MCF 10A (cell line): ENCODE measurements at regions of chr4 and their contacts with region 1.

Region 1: GRCh38 chr4:122602277-122603142 is 18.4 kb downstream of the IL21 start:
- DNase-seq: peak; percentile 59
- H3K4me3 Mint-ChIP-seq: peak overlapping the region; percentile 47
- H3K27ac Mint-ChIP-seq: no peak overlapping the region
- H3K4me1 Mint-ChIP-seq: no peaks in the 10 kb centered on the region
- H3K27me3 Mint-ChIP-seq: peaks cover 18% of the 10 kb centered on the region
- CTCF ChIP-seq: peak; percentile 43

Region 2: DNA sequence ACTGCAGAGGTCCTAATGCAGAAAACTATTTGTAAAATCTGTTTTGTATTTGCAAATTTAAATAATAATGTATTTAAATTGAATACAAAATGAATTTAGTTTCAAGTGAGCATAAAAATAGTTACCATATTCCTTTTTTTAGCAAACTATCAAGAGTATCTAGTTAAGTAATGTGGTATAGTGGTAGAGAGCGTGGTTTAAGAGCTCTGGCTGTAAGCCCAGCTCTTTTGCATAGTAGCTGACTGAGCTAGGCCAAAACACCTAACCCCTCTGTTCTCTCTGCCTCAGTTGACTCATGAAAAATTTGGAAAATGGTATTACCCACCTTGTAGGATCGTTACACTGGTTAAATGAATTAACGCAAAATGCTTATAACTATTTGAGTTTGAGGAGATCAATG is 241.8 kb before region 1 on chr4:
- CTCF ChIA-PET with region 1: no interaction called
- POLR2A ChIA-PET with region 1: no interaction called
- intact Hi-C with region 1: no loop called
- DNase-seq: no peak
- H3K4me3 Mint-ChIP-seq: no peak overlapping the region
- H3K27ac Mint-ChIP-seq: no peak overlapping the region
- H3K4me1 Mint-ChIP-seq: no peaks in the 10 kb centered on the region
- H3K27me3 Mint-ChIP-seq: no peaks in the 10 kb centered on the region
- CTCF ChIP-seq: no peak

Region 3: GRCh38 chr4:122588453-122589238 is 13.9 kb before region 1 on chr4:
- CTCF ChIA-PET with region 1: interaction called, 24 read pairs
- POLR2A ChIA-PET with region 1: interaction called, 6 read pairs
- intact Hi-C with region 1: no loop called
- DNase-seq: peak; percentile 24
- H3K4me3 Mint-ChIP-seq: no peak overlapping the region
- H3K27ac Mint-ChIP-seq: no peak overlapping the region
- H3K4me1 Mint-ChIP-seq: peaks cover 19% of the 10 kb centered on the region
- H3K27me3 Mint-ChIP-seq: no peaks in the 10 kb centered on the region
- CTCF ChIP-seq: no peak

Region 4: DNA sequence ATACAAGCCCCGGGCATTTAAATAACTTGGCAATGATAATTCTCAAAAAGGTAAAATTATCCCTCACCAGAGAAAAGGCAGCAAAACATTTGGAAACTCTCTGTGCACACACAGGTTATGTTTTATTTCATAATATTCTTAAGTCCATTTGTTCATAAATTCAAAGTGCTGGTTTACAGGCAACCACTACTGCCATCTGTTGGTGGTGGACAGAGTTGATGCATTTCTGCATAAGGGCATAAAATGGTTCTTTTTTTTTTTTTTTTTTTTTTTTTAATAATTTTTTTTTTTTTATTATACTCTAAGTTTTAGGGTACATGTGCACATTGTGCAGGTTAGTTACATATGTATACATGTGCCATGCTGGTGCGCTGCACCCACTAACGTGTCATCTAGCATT is 49.9 kb after region 1 on chr4:
- CTCF ChIA-PET with region 1: interaction called, 11 read pairs
- POLR2A ChIA-PET with region 1: no interaction called
- intact Hi-C with region 1: loop called (anchors 5 kb)
- DNase-seq: peak; percentile 62
- H3K4me3 Mint-ChIP-seq: no peak overlapping the region
- H3K27ac Mint-ChIP-seq: no peak overlapping the region
- H3K4me1 Mint-ChIP-seq: no peaks in the 10 kb centered on the region
- H3K27me3 Mint-ChIP-seq: no peaks in the 10 kb centered on the region
- CTCF ChIP-seq: peak; percentile 40

Region 5: DNA sequence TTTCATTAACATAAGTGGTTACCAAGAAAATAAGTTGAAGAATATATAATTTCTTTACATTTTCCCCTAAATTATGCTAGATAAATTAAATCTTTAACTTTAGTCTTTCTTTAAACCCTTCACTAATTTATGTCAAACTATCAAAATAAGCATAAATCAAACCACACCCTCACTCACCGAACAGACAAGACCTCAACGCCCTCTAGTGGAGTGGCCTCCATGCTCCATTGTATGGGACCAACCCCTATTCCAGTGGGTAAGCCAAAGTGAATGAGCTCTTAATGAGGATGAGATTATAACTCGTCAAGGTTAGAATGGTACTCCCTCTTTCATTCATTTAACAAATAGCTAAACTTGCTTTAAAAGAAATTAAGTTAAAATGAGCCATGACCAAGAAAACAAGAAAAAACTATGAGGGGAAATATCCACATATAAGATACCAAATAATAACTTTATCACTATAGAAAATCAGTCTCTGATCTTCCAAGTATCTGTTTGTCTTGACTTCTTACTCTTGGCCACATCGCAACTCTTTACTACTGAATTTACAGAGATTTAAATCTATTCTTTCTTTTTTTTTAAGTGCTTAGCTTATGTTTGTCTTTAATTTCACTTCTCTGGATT is 114.4 kb after region 1 on chr4:
- CTCF ChIA-PET with region 1: interaction called, 111 read pairs
- POLR2A ChIA-PET with region 1: interaction called, 11 read pairs
- intact Hi-C with region 1: loop called (anchors 1 kb)
- DNase-seq: peak; percentile 84
- H3K4me3 Mint-ChIP-seq: no peak overlapping the region
- H3K27ac Mint-ChIP-seq: no peak overlapping the region
- H3K4me1 Mint-ChIP-seq: peaks cover 6% of the 10 kb centered on the region
- H3K27me3 Mint-ChIP-seq: no peaks in the 10 kb centered on the region
- CTCF ChIP-seq: peak; percentile 75

Region 6: GRCh38 chr4:122783301-122784215 is 181.0 kb after region 1 on chr4:
- CTCF ChIA-PET with region 1: no interaction called
- POLR2A ChIA-PET with region 1: no interaction called
- intact Hi-C with region 1: no loop called
- DNase-seq: peak; percentile 77
- H3K4me3 Mint-ChIP-seq: peak overlapping the region; percentile 3
- H3K27ac Mint-ChIP-seq: peak overlapping the region; percentile 57
- H3K4me1 Mint-ChIP-seq: peaks cover 31% of the 10 kb centered on the region
- H3K27me3 Mint-ChIP-seq: no peaks in the 10 kb centered on the region
- CTCF ChIP-seq: no peak

Region 7: DNA sequence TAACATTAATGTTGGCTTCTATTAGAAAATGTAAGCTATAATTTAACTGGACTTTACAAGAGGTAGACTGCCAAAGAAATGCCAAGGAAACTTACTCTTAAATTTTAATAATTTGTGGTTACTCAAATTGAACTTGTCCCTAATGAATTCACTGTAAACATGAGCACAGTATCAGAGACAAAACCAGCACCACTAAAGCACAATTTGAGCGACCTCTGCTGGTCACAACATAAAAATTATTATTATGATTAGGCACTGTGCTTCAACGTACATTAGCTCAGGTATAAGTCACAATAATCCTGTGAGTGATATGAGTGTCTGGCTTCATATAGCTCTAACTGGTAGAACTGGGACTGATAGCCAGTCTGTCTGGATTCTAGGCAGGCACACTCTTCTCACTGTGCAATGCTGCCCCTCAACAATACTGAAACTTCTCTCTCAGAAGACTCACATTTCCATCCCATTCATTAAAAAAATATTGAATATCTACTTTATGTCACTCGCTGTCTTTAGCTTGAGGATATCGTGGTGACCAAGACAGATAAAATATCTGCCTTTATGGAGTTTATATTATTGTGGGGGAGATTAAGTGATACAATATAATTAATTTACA is 311.9 kb after region 1 on chr4:
- CTCF ChIA-PET with region 1: interaction called, 31 read pairs
- POLR2A ChIA-PET with region 1: interaction called, 3 read pairs
- intact Hi-C with region 1: no loop called
- DNase-seq: peak; percentile 43
- H3K4me3 Mint-ChIP-seq: no peak overlapping the region
- H3K27ac Mint-ChIP-seq: no peak overlapping the region
- H3K4me1 Mint-ChIP-seq: peaks cover 14% of the 10 kb centered on the region
- H3K27me3 Mint-ChIP-seq: no peaks in the 10 kb centered on the region
- CTCF ChIP-seq: peak; percentile 46

Region 8: DNA sequence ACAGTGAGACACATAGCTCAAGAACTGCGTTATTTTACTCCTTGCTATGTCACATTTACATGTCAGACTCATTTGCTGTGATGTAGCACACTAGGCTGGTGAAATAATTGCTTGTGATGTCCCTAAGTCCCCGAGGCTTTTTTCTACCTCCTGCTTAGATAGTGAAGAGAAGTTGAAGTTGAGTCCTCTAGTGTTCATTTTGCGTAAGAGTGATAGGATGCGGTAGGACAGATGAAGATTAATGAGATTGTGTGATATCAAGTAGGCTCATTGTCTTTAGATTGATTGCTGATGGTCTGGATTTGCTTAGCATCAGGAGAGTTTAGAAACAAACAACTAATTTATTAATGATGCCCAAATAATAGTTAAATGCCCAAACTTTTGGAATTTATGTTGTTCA is 493.5 kb after region 1 on chr4:
- CTCF ChIA-PET with region 1: no interaction called
- POLR2A ChIA-PET with region 1: no interaction called
- intact Hi-C with region 1: loop called (anchors 10 kb)
- DNase-seq: peak; percentile 32
- H3K4me3 Mint-ChIP-seq: no peak overlapping the region
- H3K27ac Mint-ChIP-seq: no peak overlapping the region
- H3K4me1 Mint-ChIP-seq: no peaks in the 10 kb centered on the region
- H3K27me3 Mint-ChIP-seq: no peaks in the 10 kb centered on the region
- CTCF ChIP-seq: no peak